ENCODE measurements at regions of chr6 and their contacts with region 1.

Region 1: DNA sequence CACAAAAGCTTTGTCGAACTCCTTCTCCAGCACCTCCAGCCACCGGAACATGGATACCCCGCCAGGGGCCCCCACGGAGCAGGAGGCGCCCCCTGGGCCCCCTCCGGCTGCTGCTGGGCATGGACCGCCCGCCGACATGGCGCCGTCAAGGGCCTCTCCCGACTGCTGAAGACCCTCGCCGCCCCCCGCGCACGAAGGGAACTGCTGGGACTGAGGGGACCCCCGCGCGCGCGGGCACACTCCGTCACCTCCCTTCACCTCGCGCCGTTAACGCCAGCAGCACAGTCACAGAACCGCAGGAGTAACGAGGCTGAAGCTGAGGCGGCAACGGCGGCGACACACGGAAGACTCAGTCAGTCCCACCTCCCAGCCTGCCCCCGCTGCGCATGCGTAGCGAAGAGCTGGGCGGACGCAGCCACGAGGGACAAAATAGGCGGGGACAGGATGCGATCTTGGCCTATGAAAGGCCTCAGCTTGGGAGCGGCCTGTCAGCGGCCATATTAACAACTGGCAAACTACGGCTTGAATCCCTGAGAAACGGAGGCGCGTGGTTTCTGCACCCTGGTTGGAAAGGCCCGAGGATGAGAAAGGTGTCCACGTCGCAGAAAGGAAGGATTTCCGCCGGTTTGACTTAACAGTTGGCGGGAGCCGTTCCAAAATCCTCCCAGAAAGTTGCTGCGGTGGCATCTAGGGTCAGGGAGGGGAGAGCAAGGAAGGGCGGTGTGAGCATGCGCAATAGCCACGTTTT is at the start of gene GOPC:
- DNase-seq: peak; percentile 98
- ATAC-seq: peak; percentile 97
- H3K4me3 ChIP-seq: peak within 1 kb of the TSS; percentile 79 to 88 (median 83)
- H3K27ac ChIP-seq: peak within 1 kb of the TSS; percentile 89
- H3K4me1 ChIP-seq: peaks cover 28% of the 10 kb centered on the region
- H3K27me3 ChIP-seq: no peaks in the 10 kb centered on the region; a peak in 1 of 5 replicates
- CTCF ChIP-seq: peak; percentile 63
- EP300 ChIP-seq: peak; percentile 4 to 75; a peak in 1 of 4 replicates
- POLR2A ChIP-seq: peak; percentile 95 to 98
- RAD21 ChIP-seq: peak; percentile 32; the same call in 1 of the 2 replicates
- total RNA-seq, gene GOPC: 41.5 and 54.3 TPM in 2 replicates

Region 2: DNA sequence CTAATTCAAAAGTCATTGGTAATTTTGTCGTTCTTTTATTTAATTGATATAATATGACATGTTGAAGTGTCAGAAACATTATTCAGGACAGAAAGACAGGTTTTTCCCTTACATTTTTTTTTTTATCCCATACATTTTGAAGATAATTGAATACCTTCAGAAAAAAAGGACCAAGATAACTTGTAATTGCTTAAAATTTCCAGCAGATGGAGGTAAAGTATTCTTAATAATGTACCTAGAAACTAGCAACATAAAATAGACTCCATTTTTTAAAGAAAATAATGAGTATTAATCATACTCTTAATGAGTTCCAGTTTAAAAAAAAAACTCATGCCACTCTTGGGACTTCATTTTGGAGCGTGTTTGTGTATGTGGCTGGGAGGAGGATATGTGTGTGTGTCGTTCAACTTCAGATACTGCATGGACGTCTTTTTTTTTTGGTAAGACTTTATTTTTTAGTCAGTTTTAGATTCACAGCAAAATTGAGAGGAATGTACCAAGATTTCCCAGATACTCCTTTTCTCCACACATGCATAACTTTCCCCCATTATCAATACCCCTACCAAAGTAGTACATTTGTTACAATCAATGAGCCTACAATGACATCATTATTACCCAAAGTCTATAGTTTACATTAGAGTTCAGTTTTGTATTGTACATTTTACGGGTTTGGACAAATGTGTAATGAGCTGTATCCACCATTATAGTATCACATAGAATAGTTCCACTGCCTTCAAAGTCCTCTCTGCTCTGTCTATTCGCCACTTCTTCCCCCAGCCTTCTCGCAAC is 256.0 kb before region 1 on chr6:
- CTCF ChIA-PET with region 1: interaction called, 18 read pairs
- POLR2A ChIA-PET with region 1: interaction called, 3 read pairs
- in situ Hi-C with region 1: loop called (anchors 5 kb)
- intact Hi-C with region 1: loop called (anchors 1 kb)
- DNase-seq: peak; percentile 23
- ATAC-seq: no peak
- H3K4me3 ChIP-seq: no peak overlapping the region
- H3K27ac ChIP-seq: no peak overlapping the region
- H3K4me1 ChIP-seq: no peaks in the 10 kb centered on the region; the same call in 1 of the 2 replicates
- H3K27me3 ChIP-seq: no peaks in the 10 kb centered on the region
- CTCF ChIP-seq: peak; percentile 36; the same call in 1 of the 2 replicates
- EP300 ChIP-seq: no peak
- POLR2A ChIP-seq: no peak
- RAD21 ChIP-seq: 0 out of 2 replicates have a peak, but pooled peaks have one; percentile 11

Region 3: DNA sequence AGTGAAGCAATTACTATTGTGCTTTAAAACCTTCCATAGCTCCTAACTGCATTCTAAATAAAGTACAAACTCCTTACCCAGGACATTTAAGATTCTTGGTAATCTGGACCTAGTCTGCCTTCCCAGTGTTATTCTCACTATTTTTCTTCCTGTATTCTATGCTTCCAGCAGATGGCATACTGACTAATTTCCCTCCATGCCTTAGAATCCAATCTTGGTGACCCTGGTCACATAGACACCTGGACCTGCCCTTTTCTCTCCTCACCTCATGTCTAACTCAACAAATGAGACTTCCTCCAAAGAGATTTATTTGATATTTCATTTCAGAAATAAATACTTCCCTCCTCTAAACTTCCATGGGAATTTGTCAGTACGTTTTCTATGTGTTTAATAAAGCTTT is 202.4 kb before region 1 on chr6:
- CTCF ChIA-PET with region 1: interaction called, 8 read pairs
- POLR2A ChIA-PET with region 1: no interaction called
- in situ Hi-C with region 1: no loop called
- intact Hi-C with region 1: loop called (anchors 1 kb)
- DNase-seq: peak; percentile 20
- ATAC-seq: peak; percentile 81
- H3K4me3 ChIP-seq: no peak overlapping the region
- H3K27ac ChIP-seq: no peak overlapping the region
- H3K4me1 ChIP-seq: peaks cover 7% of the 10 kb centered on the region; the same call in 1 of the 2 replicates
- H3K27me3 ChIP-seq: no peaks in the 10 kb centered on the region
- CTCF ChIP-seq: peak; percentile 51
- EP300 ChIP-seq: no peak
- POLR2A ChIP-seq: no peak
- RAD21 ChIP-seq: no peak

Region 4: DNA sequence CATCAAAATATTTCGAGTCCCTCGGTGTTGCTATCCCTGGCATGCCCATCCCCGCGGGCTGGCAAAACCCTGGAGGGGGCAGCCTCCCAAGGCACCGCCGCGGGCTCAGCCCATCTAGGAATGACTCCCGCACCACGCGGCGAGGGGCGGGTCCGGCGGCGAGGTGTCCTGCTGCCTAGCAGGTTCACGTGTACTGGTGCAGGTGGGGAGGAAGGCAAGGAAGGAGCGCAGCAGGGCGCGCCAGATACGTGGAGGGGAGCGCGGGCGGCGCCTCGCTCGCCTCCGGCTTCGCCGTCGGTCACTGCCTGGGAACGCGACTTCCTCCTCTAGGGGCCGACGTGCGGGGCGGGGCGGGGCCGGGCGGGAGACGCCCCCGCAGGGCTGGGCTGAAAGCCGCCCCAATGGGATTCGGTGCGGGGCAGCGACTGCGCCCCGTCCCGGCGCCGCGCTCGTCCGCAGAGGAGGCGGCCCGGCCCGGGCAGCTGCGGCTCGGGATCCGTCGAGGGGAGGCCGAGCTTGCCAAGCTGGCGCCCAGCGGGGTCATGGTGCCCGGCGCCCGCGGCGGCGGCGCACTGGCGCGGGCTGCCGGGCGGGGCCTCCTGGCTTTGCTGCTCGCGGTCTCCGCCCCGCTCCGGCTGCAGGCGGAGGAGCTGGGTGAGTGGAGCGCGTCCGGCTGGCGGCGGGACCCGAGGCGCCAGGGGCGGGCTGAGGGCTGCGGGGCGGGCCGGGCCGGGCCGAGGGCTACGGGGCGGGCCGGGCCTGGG is 119.9 kb before region 1 on chr6 and contains the start of gene DCBLD1:
- CTCF ChIA-PET with region 1: interaction called, 11 read pairs
- POLR2A ChIA-PET with region 1: interaction called, 64 read pairs
- in situ Hi-C with region 1: no loop called
- intact Hi-C with region 1: loop called (anchors 1 kb)
- DNase-seq: peak; percentile 78
- ATAC-seq: peak; percentile 75
- H3K4me3 ChIP-seq: peak within 1 kb of the TSS; percentile 86 to 92 (median 91)
- H3K27ac ChIP-seq: peak within 1 kb of the TSS; percentile 91
- H3K4me1 ChIP-seq: peaks cover 82% of the 10 kb centered on the region
- H3K27me3 ChIP-seq: no peaks in the 10 kb centered on the region; a peak in 1 of 5 replicates
- CTCF ChIP-seq: peak; percentile 38; the same call in 1 of the 2 replicates
- EP300 ChIP-seq: no peak; a peak in 1 of 4 replicates
- POLR2A ChIP-seq: peak; percentile 85 to 88
- RAD21 ChIP-seq: peak; percentile 64
- total RNA-seq, gene DCBLD1: 26.0 and 41.5 TPM in 2 replicates

Region 5: DNA sequence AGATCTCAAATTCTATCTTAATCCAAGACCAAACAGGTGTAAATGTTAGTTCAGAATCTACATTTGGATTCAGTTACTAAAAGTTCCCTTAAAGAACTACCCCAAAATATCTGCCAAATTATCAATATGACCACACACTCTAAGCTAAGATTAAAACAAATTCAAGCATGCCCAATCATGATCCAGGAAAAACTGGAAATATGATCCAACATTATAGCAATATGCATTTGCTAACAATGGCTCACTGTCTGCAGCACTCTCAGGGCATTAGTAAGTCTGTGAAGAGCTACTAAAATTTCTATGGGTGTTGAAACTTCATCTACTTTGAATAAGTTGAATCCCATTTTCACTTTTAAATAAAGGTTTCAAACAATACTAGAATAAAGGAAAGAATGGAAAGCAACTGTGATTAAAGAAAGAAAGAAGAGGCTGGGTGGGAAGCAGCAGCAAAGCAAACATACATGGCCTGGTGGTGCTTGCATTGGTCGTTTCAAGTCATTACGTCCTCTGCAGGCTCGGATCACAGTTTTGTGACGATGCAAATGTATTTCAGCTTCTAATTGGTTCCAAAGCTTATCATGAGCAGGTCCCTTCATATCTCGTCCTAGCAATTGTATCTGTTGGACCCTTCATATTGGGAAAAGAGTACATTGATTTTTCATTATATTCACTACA is 29.2 kb before region 1 on chr6:
- CTCF ChIA-PET with region 1: no interaction called
- POLR2A ChIA-PET with region 1: interaction called, 10 read pairs
- in situ Hi-C with region 1: no loop called
- intact Hi-C with region 1: no loop called
- DNase-seq: no peak
- ATAC-seq: no peak
- H3K4me3 ChIP-seq: no peak overlapping the region
- H3K27ac ChIP-seq: no peak overlapping the region
- H3K4me1 ChIP-seq: no peaks in the 10 kb centered on the region
- H3K27me3 ChIP-seq: no peaks in the 10 kb centered on the region
- CTCF ChIP-seq: no peak
- EP300 ChIP-seq: no peak
- POLR2A ChIP-seq: no peak
- RAD21 ChIP-seq: no peak

Region 6: DNA sequence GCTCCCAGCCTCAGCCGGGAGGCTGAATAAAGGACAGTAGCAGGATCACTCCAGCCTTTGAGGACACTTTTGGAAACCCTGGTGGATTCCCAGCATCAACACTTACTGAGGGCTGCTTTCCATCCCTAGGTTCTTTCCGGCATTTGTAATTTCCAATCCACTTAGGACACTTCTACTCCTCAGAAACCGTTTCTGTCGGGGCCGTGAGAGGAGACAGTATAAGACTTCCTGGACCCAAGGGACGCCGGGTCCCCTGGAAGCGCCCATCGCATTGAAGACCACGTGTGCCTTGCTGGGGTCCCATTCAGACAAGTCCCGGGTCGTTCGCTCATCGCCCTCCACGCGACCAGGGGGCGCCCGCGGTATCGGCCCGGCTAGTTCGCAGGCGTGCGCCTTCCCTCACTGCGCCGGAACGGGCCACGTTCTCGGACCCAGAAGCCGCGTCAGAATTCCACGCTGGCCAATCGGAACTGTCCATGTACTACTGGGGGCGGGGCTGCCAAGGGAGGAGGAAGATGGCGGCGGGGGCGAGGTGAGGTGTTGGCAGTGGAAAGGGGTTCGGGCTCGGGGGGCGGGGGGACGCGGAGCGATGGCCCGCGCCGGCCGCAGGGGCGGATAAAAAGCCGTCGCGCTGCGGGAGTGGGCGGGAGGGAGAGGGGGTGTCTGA is 72.8 kb after region 1 on chr6 and contains the start of gene NUS1:
- CTCF ChIA-PET with region 1: no interaction called
- POLR2A ChIA-PET with region 1: no interaction called
- in situ Hi-C with region 1: no loop called
- intact Hi-C with region 1: loop called (anchors 1 kb)
- DNase-seq: peak; percentile 97
- ATAC-seq: peak; percentile 96
- H3K4me3 ChIP-seq: peak within 1 kb of the TSS; percentile 86 to 93 (median 88)
- H3K27ac ChIP-seq: peak within 1 kb of the TSS; percentile 62
- H3K4me1 ChIP-seq: peaks cover 55% of the 10 kb centered on the region
- H3K27me3 ChIP-seq: no peaks in the 10 kb centered on the region; a peak in 1 of 5 replicates
- CTCF ChIP-seq: peak; percentile 100
- EP300 ChIP-seq: peak; percentile 29 to 46; a peak in 1 of 4 replicates
- POLR2A ChIP-seq: peak; percentile 50 to 82
- RAD21 ChIP-seq: peak; percentile 62
- total RNA-seq, gene NUS1: 18.3 and 36.5 TPM in 2 replicates

Region 7: DNA sequence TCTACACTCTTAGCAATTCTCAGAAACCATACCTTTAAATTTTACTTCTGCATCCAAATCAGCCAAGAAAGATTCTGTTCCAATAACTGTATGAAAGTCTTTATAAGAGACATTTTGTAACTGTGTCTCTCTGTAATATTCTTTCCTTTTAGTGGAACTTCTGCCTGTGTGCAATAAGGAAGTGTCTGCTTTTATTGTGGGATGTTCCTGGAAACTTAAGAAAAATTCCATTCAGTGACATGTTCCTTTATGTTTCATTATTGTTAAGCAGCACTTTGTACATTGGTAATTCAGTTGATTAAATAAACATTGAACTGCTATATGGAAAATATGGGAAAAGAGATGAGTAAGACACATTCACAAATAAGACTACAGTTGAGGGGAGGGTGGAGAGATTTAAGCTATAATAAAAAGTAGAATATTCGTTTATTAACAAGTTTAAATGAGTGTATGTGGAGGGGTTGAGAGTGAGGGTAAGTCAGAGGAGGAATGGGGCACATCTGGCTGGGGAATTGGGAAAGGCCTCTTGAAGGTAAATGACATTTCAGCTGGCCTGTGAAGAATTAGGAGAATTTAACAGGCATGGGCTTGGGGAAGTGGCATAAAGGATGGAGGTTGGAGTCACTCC is 84.8 kb after region 1 on chr6:
- CTCF ChIA-PET with region 1: no interaction called
- POLR2A ChIA-PET with region 1: no interaction called
- in situ Hi-C with region 1: no loop called
- intact Hi-C with region 1: no loop called
- DNase-seq: no peak
- ATAC-seq: no peak
- H3K4me3 ChIP-seq: no peak overlapping the region
- H3K27ac ChIP-seq: no peak overlapping the region
- H3K4me1 ChIP-seq: peaks cover 15% of the 10 kb centered on the region
- H3K27me3 ChIP-seq: no peaks in the 10 kb centered on the region
- CTCF ChIP-seq: no peak
- EP300 ChIP-seq: no peak
- POLR2A ChIP-seq: no peak
- RAD21 ChIP-seq: no peak

Measured in HepG2 (cell line).